PC-3 (cell line): ENCODE measurements at regions of chr5 and their contacts with region 1.

Region 1: DNA sequence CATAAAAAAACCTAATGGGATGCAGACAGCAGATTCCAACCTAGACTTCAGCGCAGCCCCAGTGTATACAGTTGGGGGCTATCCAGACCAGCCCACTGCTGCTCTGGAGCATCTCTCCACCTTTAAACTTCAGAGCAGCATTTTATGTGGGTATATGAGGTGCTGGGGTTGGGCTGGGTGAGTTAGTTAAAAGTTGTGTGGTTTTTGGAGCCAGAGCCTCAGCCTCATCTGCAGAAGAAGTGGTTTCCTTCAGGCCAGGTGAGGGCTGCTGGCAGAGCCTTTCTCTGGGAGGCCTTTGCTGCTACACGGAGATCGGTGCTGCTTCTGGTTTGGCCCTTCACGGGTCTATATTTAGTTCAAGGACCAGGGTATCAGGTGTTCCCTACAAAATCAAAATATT is 228.3 kb downstream of the PDZD2 start:
- DNase-seq: no peak
- ATAC-seq: no peak
- H3K4me3 ChIP-seq: no peak overlapping the region
- H3K27ac ChIP-seq: no peak overlapping the region
- H3K4me1 ChIP-seq: no peaks in the 10 kb centered on the region
- H3K27me3 ChIP-seq: no peaks in the 10 kb centered on the region
- CTCF ChIP-seq: no peak

Region 2: GRCh38 chr5:31895826-31896225 is 28.6 kb after region 1 on chr5:
- CTCF ChIA-PET with region 1: no interaction called
- POLR2A ChIA-PET with region 1: interaction called, 19 read pairs
- intact Hi-C with region 1: no loop called
- DNase-seq: no peak
- ATAC-seq: no peak
- H3K4me3 ChIP-seq: no peak overlapping the region
- H3K27ac ChIP-seq: no peak overlapping the region
- H3K4me1 ChIP-seq: no peaks in the 10 kb centered on the region
- H3K27me3 ChIP-seq: no peaks in the 10 kb centered on the region
- CTCF ChIP-seq: no peak